OCI-LY7 (cell line): ENCODE measurements at regions of chr20 and their contacts with region 1.

Region 1: DNA sequence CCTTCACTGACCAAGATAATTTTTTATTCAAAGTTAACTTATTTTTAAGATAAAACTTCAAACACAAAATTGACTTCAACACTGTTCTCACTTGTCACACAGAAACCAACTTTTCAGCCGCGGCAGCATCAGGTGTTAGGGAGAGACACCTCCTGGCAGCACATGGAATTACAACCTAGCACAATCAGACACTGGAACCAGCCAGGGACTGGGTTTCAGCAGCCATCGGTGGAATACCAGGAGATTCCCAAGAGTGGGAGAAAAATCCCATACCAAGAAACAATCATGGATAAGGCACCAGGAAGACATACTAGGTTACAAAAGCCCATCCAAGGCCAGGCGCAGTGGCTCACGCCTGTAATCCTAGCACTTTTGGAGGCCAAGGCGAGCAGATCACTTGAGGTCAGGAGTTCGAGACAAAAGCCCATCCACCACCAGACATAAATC is 70.0 kb downstream of the SNX5 start:
- DNase-seq: peak; percentile 80
- H3K4me3 ChIP-seq: no peak overlapping the region
- H3K27ac ChIP-seq: no peak overlapping the region
- H3K4me1 ChIP-seq: peaks cover 26% of the 10 kb centered on the region
- CTCF ChIP-seq: peak; percentile 98

Region 2: GRCh38 chr20:17497821-17498580 is 400.6 kb before region 1 on chr20:
- CTCF ChIA-PET with region 1: no interaction called
- POLR2A ChIA-PET with region 1: no interaction called
- intact Hi-C with region 1: no loop called
- DNase-seq: no peak
- H3K4me3 ChIP-seq: no peak overlapping the region
- H3K27ac ChIP-seq: no peak overlapping the region
- H3K4me1 ChIP-seq: no peaks in the 10 kb centered on the region
- CTCF ChIP-seq: no peak

Region 3: DNA sequence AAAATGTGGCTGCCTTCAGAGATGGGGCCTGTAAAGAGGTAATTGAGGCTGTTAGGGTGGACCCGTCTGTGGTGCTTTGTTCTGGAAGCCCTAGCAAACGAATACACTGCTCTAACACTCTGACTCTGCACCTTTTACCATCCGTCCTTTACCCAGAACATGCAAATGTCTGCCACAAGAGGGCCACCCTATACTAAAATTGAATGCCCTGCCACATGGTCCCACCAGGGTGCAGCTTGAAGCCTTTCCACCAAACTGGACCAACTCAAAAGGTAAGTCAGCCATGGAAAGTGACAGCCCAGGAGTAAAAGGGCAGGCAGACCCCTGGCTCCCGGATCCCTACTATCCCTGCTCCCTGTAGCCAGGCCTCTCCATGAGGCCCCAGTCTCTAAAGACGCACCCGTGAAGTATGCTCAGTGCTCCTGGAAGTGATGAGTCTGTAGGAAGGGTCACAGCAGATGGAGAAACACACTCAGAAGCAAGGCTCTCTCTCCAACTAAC is 361.6 kb before region 1 on chr20:
- CTCF ChIA-PET with region 1: no interaction called
- POLR2A ChIA-PET with region 1: no interaction called
- intact Hi-C with region 1: loop called (anchors 2 kb)
- DNase-seq: peak; percentile 78
- H3K4me3 ChIP-seq: no peak overlapping the region
- H3K27ac ChIP-seq: no peak overlapping the region
- H3K4me1 ChIP-seq: peaks cover 6% of the 10 kb centered on the region
- CTCF ChIP-seq: peak; percentile 90

Region 4: DNA sequence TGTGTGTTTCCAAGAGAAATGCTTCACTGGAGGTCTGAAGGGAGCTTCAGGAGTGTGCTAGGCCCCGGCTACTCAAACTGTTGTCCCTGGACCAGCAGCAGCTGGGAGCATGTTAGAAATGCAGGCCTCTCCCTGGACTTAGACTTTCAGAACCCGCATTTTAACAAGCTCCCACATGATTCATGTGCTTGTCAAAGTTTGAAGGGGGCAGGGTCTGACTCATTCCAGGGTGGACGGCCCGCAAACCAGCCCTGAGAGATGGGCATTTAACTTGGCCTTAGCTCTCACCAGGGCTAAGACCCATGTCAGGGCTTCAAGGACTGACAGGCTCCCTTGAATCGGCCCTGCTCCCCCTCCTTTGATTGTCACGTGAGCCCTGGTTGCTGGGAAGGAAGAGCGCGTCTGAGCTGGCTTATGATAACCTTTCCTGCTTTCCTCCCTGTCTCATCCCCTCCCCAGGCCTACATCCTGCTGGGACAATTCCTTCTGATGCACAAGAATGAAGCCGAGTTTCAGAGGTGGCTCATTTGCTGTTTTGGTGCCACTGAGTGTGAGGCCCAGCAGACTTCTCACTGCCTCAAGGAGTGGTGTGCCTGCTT is 163.3 kb before region 1 on chr20:
- CTCF ChIA-PET with region 1: no interaction called
- POLR2A ChIA-PET with region 1: no interaction called
- intact Hi-C with region 1: no loop called
- DNase-seq: no peak
- H3K4me3 ChIP-seq: no peak overlapping the region
- H3K27ac ChIP-seq: no peak overlapping the region
- H3K4me1 ChIP-seq: no peaks in the 10 kb centered on the region
- CTCF ChIP-seq: no peak

Region 5: GRCh38 chr20:17856024-17856564 is 42.5 kb before region 1 on chr20:
- CTCF ChIA-PET with region 1: no interaction called
- POLR2A ChIA-PET with region 1: interaction called, 5 read pairs
- intact Hi-C with region 1: loop called (anchors 2 kb)
- DNase-seq: peak; percentile 93
- H3K4me3 ChIP-seq: no peak overlapping the region
- H3K27ac ChIP-seq: peak overlapping the region; percentile 66
- H3K4me1 ChIP-seq: peaks cover 56% of the 10 kb centered on the region
- CTCF ChIP-seq: no peak

Region 6: GRCh38 chr20:17878912-17879602 is 19.5 kb before region 1 on chr20:
- CTCF ChIA-PET with region 1: no interaction called
- POLR2A ChIA-PET with region 1: no interaction called
- intact Hi-C with region 1: loop called (anchors 1 kb)
- DNase-seq: peak; percentile 59
- H3K4me3 ChIP-seq: peak overlapping the region; percentile 29
- H3K27ac ChIP-seq: peak overlapping the region; percentile 68
- H3K4me1 ChIP-seq: peaks cover 32% of the 10 kb centered on the region
- CTCF ChIP-seq: peak; percentile 77

Region 7: DNA sequence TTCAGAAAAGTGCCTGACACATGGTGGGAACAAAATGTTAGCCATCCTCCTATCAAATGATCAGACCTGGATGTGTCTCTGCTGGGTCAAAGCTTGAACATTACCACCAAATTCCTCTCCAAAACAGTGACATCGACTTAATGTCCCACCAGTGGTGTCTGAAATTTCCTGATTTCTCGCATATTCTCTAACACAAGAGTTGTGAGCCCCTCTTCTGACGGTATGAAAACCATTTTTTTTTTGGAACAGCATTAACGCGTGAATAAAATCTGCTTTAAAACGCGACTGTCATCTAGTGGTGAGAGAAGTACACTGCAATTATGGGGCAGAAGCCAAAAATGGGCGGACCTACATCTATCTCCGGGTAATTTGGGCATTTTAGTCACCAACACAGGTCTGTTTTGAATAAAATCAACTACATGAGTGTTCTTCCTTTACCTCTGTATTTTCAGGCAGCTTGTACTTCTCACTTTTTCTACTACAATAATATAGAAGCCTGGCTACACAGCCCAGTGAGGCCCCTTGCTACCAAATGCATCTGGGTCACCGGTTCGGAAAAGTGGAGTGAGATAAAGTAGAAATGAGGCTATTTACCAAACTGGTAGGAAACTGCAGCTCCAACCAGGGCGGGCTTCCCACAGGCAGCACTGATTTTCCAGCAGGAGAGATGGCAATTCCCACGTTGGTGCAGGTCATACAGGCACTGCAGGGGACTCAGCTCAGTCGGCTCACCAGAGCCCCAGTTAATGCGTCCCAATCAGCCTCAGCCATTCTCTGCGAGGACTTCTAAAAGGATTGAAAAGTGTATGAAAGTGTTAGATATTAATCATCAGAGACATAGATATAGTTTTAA is 97.6 kb after region 1 on chr20:
- CTCF ChIA-PET with region 1: no interaction called
- POLR2A ChIA-PET with region 1: no interaction called
- intact Hi-C with region 1: loop called (anchors 2 kb)
- DNase-seq: peak; percentile 76
- H3K4me3 ChIP-seq: no peak overlapping the region
- H3K27ac ChIP-seq: no peak overlapping the region
- H3K4me1 ChIP-seq: peaks cover 14% of the 10 kb centered on the region
- CTCF ChIP-seq: peak; percentile 99

Region 8: DNA sequence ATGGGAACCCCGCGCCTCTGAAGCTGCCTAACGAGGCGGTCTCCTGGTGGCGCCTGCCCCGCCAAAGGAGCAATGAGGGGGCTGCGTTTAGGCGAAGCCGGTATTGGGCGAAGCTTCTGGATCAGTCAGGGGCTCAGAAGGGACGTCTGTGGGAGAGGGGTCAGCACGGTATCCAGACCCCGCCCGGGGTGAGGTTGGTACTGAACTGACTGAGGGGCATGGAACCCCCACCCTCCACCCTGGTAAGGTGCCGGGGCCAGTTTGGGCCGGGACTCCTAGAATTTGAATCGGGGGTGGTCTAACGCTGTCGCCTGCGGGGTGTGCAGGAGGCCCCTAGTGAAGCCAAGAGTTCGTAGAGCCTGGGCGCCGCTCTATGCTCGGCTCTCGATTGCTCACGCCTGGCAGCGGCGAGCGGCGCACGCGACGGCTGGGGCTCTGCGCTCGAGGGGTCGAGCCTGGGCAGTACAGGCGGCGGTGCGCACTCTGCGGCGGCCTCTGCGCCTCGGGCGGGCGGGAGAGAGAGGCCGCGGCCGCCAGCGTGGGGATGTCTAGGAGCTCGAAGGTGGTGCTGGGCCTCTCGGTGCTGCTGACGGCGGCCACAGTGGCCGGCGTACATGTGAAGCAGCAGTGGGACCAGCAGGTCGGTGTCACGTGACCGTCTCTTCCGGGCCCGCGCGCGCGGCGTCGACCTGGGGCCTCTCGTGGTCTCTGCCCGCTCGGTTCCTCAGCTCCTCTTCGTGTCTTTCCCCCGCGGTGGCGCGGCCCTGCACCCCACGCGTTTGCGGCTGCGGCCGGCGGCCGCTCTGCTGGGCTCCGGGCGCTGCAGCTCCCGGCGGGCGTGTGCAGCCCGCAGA is 239.1 kb after region 1 on chr20 and contains the starts of genes KAT14 and PET117:
- CTCF ChIA-PET with region 1: no interaction called
- POLR2A ChIA-PET with region 1: no interaction called
- intact Hi-C with region 1: no loop called
- DNase-seq: peak; percentile 95
- H3K4me3 ChIP-seq: peak within 1 kb of the TSS; percentile 99
- H3K27ac ChIP-seq: peak within 1 kb of the TSS; percentile 57
- H3K4me1 ChIP-seq: peaks cover 19% of the 10 kb centered on the region
- CTCF ChIP-seq: no peak
- total RNA-seq, gene KAT14: 13.1 and 14.9 TPM in 2 replicates
- total RNA-seq, gene PET117: 13.1 and 15.7 TPM in 2 replicates